ENCODE measurements at regions of chr7 and their contacts with region 1.

Region 1: GRCh38 chr7:42115795-42116194 is 121.2 kb downstream of the GLI3 start:
- DNase-seq: no peak
- ATAC-seq: no peak
- H3K4me3 ChIP-seq: no peak overlapping the region
- H3K27ac ChIP-seq: no peak overlapping the region
- H3K4me1 ChIP-seq: no peaks in the 10 kb centered on the region
- H3K27me3 ChIP-seq: no peaks in the 10 kb centered on the region
- CTCF ChIP-seq: no peak

Region 2: DNA sequence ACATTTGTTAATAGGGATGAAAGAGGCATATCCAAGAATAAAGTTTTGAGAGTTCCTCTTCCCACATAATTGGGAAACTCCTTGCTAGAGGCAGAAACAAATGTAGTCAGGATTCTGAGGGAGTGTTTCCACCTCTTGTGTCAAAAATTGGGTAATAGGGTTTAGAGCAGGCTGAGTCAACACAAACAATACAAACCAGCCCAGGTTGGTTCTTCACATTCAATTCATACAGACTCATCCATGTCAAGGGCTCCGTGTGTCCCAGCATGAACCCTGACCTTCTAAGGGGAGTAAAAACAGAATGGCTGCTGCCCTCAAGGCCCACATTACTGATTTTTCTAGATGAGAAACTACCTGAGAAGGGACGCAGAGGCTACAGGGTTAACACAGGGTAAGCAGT is 45.9 kb after region 1 on chr7:
- intact Hi-C with region 1: loop called in 1 of 2 experiments (anchors 10 kb)
- DNase-seq: no peak
- ATAC-seq: peak in 1 of 4 donors; percentile 43
- H3K4me3 ChIP-seq: no peak overlapping the region
- H3K27ac ChIP-seq: no peak overlapping the region
- H3K4me1 ChIP-seq: no peaks in the 10 kb centered on the region
- H3K27me3 ChIP-seq: no peaks in the 10 kb centered on the region
- CTCF ChIP-seq: no peak

Measured in psoas muscle (tissue), 8 donors.